ENCODE measurements at regions of chr3 and their contacts with region 1.

Region 1: DNA sequence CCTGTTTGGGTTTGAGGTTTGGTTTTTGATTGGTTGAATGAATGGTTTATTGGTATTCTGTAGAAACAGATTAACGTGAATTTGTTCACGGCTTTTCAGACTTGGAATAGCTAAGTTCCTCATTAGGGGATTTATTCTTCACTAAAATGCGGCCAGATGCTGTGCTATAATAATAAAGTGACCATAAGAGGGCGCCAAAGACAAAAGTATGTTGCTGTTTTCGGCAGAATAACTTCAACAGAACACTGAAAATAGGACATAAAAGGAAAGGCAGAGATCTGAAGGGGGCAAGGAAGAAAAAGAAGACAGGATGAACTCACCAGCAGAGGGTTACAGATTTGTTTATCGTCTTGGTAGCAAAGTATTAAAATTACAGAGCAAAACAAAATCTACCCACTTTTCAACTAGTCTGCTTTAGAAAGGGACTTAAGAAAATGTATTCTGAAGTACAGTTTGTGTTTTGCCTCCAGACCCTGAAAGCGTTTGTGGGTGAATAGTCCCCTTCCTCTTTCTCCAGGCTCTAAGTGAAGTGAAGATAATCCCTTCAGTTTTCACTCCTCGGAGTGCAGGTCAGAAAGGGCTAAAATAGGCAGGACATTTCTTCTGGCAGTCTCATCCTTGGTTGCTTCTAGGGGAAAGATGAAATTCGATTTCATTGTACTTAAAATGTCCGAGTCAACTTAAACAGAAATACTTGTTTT is 147.6 kb downstream of the IL20RB start:
- DNase-seq: peak; percentile 35
- H3K4me3 ChIP-seq: peak overlapping the region in 1 of 2 experiments; percentile 29; a peak in 1 of 4 replicates
- H3K27ac ChIP-seq: no peak overlapping the region
- H3K4me1 ChIP-seq: no peaks in the 10 kb centered on the region
- H3K27me3 ChIP-seq: no peaks in the 10 kb centered on the region
- CTCF ChIP-seq: peak; percentile 83
- EP300 ChIP-seq: no peak
- RAD21 ChIP-seq: peak; percentile 92

Region 2: DNA sequence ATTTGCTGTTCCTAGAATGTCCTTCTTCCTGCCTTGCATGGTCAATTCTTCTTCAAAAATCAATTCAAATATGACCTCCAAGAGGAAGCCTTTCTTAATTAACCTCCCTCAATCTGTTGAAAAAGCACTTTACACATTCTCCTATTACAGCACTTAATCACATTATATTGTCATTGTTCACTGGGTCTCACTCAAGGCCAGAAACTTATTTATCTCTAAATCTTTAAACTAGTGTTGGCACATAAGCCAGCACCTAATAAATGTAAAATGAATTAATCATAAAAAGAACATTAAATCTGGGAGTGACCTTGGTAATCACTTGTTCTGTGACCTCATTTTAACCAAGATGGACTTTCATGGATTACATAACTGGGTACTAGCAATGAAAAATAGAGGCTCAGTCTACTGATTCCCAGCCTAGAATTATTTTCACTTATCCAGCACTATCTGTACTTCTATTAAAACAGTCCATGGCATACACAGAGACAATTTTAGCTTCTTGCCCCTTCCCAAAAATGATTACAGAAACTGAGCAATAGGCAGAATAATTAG is 931.4 kb before region 1 on chr3:
- CTCF ChIA-PET with region 1: no interaction called
- POLR2A ChIA-PET with region 1: no interaction called
- DNase-seq: no peak
- H3K4me3 ChIP-seq: no peak overlapping the region
- H3K27ac ChIP-seq: peak overlapping the region in 1 of 2 experiments; percentile 1; a peak in 1 of 4 replicates
- H3K4me1 ChIP-seq: peaks cover 0 to 27% of the 10 kb centered on the region in 2 experiments; a peak in 1 of 4 replicates
- H3K27me3 ChIP-seq: no peaks in the 10 kb centered on the region
- CTCF ChIP-seq: no peak
- EP300 ChIP-seq: no peak
- RAD21 ChIP-seq: no peak

Region 3: DNA sequence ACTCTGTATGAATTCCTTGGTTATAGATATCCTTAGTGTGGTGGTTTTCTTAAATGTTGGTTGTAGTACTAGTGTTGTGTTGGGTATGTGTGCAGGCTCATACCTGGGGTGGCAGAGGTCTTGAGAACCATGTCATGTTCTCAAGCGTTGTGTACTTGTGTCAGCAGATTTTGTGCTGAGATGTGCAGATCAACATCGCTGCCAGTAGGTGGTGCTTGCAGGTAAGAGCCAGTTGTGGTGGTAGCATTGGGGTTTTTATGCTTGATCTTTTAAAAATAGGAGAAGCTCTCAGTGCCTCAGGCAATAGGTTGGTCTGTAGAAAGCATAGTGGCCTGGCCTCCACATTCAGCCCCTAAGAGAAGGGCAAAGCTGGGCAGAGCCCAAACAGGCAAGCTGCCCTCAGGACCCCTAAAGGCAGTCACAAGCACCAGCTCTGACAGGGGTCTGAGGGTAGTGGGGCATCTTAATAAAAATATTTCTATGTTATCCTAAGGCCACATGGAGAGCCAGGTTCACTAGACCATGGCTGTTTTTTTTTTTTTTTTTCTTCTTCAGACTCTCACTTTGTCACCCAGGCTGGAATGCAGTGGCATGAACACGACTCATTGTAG is 16.4 kb after region 1 on chr3:
- CTCF ChIA-PET with region 1: interaction called, 40 read pairs
- POLR2A ChIA-PET with region 1: no interaction called
- DNase-seq: peak; percentile 33
- H3K4me3 ChIP-seq: no peak overlapping the region
- H3K27ac ChIP-seq: no peak overlapping the region
- H3K4me1 ChIP-seq: no peaks in the 10 kb centered on the region
- H3K27me3 ChIP-seq: no peaks in the 10 kb centered on the region
- CTCF ChIP-seq: peak; percentile 57
- EP300 ChIP-seq: no peak
- RAD21 ChIP-seq: peak; percentile 71

Region 4: GRCh38 chr3:137692803-137693431 is 587.5 kb after region 1 on chr3:
- CTCF ChIA-PET with region 1: interaction called, 21 read pairs
- POLR2A ChIA-PET with region 1: no interaction called
- DNase-seq: peak; percentile 38
- H3K4me3 ChIP-seq: 0 out of 4 replicates have a peak overlapping the region, but pooled peaks of 1 of the 2 experiments have one; percentile 29
- H3K27ac ChIP-seq: no peak overlapping the region
- H3K4me1 ChIP-seq: no peaks in the 10 kb centered on the region
- H3K27me3 ChIP-seq: no peaks in the 10 kb centered on the region
- CTCF ChIP-seq: no peak
- EP300 ChIP-seq: no peak
- RAD21 ChIP-seq: peak; percentile 80

Region 5: DNA sequence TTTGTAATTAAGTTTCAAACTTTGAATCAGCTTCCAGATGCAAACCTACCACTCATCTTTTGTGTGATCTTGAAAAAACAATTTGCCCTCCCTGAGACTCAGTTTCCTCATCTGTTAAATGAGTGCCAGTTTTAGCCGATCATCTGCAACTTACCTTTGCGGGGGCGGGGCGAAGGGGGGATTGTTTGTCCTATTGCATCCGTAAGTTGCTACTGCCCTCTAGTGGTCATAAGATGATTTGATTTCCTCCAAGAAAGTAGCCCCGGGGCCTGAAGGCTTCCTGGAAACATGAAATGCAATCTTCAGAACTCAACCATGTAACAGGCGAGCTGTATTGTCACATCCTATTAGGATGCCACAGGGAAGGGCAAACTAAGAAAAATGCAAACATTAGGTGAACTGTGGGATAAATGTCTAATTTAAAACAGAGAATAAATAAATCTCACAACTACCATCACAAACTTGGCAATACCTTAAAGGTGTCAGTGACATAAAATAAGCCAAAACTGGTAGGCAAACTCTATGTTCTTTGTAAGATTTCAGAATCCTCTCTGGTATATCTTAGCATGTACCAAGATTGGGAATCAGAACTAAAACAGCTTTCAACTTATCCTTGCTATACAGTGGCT is 841.0 kb after region 1 on chr3:
- CTCF ChIA-PET with region 1: interaction called, 70 read pairs
- POLR2A ChIA-PET with region 1: no interaction called
- DNase-seq: peak; percentile 59
- H3K4me3 ChIP-seq: peak overlapping the region in 1 of 2 experiments; percentile 24; a peak in 1 of 4 replicates
- H3K27ac ChIP-seq: no peak overlapping the region
- H3K4me1 ChIP-seq: no peaks in the 10 kb centered on the region
- H3K27me3 ChIP-seq: no peaks in the 10 kb centered on the region
- CTCF ChIP-seq: peak; percentile 86
- EP300 ChIP-seq: no peak
- RAD21 ChIP-seq: peak; percentile 80

Region 6: DNA sequence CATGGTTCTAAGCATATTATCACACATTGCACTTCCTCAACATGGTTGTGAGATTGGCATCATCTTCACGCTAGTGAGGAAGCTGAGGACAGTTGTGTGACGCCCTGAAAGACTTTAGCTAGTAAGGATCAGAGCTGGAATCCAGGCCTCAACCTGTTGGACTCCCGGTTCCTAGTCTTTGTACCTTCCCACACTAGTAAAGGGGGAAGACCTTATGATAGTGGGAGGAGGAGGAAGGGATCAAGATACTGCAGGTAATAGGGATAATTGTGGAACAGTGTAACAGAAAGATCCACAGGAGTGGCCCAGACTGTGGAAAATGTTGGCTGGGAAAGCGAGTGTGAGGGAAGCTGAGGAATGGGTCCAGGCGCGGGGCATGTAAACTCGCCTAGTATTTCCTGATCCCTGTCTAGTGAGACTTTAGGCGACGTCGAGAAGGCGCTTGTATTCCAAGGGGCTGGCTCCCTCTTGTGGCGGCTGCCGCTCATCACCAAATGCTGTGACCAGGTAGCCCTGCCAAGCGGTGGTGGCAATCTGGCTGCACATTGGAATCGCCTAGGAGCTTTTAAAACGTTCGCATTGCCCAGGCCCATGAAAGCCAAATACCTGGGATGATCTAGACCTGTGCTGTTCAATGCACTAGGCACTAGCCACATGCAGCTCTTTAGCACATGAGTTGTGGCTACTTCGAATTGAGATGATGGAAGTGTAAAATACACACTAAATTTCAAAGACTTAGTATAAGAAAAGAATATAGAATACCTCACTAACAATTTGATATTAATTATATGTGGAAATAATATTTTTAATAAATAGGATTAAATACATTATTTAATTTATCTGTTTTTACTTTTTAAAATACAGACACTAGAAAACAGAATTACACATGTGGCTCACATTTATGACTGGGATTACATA is 865.7 kb after region 1 on chr3:
- CTCF ChIA-PET with region 1: interaction called, 75 read pairs
- POLR2A ChIA-PET with region 1: no interaction called
- DNase-seq: peak; percentile 72
- H3K4me3 ChIP-seq: peak overlapping the region in 1 of 2 experiments; percentile 40; a peak in 3 of 4 replicates
- H3K27ac ChIP-seq: no peak overlapping the region
- H3K4me1 ChIP-seq: peaks cover 0 to 3% of the 10 kb centered on the region in 2 experiments; a peak in 1 of 4 replicates
- H3K27me3 ChIP-seq: no peaks in the 10 kb centered on the region
- CTCF ChIP-seq: peak; percentile 85
- EP300 ChIP-seq: no peak
- RAD21 ChIP-seq: peak; percentile 91

Region 7: GRCh38 chr3:138051946-138052802 is 946.7 kb after region 1 on chr3:
- CTCF ChIA-PET with region 1: interaction called, 19 read pairs
- POLR2A ChIA-PET with region 1: no interaction called
- DNase-seq: peak; percentile 34
- H3K4me3 ChIP-seq: no peak overlapping the region
- H3K27ac ChIP-seq: no peak overlapping the region
- H3K4me1 ChIP-seq: no peaks in the 10 kb centered on the region; a peak in 1 of 4 replicates
- H3K27me3 ChIP-seq: no peaks in the 10 kb centered on the region
- CTCF ChIP-seq: peak; percentile 72
- EP300 ChIP-seq: no peak
- RAD21 ChIP-seq: peak; percentile 70